OCI-LY7 (cell line): ENCODE measurements at regions of chr10 and their contacts with region 1.

Region 1: DNA sequence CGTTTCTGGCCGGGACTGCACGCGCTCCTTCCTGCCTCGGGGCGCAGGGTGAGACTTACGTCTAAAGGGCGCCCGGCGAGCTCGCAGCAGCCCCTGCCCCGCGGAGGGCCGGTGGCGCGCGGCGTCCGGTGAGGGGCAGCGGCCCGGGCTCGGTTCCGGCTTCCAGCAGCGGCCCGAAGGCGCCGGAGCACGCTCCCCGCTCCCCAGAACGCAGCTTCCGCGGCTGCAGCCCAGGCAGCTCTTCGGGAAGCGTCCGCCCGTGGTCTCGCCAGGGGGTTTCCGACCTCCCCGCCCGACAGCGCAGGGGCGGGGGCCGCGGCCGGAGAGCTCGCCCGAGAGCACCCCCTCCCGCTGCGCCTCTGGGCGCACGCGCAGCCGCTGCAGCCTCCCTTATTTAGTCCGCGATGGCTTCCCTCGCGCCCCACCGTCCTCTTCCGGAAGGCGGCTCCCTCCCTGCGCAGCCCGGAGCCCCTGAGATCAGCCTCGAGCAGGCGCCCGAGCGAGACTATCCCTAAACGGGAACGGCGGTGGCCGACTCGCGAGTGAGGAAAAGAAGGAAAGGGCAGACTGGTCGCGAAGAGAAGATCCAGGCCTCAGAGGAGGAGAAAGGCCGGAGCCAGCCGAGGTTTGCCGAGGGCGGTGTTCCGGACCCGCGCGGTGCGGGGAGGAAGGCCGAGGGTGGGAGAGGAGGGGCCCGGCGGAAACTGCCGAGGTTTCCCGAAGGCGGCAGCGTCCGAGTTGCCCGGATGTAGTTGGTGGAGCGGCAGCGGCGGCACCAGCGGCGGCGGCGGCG is at the start of gene WAC:
- DNase-seq: peak; percentile 95
- H3K4me3 ChIP-seq: peak within 1 kb of the TSS; percentile 100
- H3K27ac ChIP-seq: peak within 1 kb of the TSS; percentile 85
- H3K4me1 ChIP-seq: peaks cover 45% of the 10 kb centered on the region
- CTCF ChIP-seq: no peak
- total RNA-seq, gene WAC: 111 and 114 TPM in 2 replicates

Region 2: DNA sequence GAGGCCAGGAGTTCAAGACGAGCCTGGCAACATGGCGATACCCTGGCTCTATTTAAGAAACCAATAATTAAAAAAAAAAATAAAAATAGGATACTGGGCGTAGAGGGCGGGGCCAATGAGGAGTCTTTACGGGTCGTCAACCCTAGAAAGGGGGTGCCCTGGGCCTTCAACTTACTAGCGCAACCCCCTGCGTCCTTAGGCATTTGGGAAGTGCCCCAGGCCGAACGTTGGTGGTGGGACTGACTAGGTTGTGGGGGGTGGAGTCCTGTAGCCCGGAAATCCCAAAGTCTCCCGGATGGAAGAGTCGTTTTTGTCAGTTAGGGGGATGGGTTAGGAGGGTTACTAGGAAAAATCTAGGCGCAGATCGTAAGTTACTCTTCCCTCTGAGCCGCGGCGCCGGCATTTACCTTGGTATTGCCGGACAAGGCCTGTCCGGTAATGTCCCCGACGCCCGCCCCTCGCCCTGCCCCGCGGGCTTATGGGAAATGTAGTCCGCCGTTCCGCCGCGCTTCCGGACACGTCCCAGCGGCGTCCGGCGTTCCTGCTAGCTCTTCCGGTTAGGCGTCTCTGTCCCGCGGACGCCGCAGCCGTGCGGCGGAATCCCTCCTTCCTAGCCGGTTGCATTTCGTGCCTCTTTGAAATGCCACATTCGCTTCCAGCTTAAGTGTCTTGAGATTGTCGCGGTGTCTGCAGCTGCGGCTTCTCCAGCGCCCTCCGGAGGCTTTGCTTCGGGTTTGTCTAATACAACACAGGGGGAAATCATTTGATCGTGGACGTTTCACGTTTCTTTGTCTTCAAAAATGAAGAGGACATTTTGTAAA is 1290.7 kb before region 1 on chr10:
- CTCF ChIA-PET with region 1: no interaction called
- POLR2A ChIA-PET with region 1: no interaction called
- intact Hi-C with region 1: loop called (anchors 5 kb)
- DNase-seq: peak; percentile 96
- H3K4me3 ChIP-seq: peak overlapping the region; percentile 93
- H3K27ac ChIP-seq: peak overlapping the region; percentile 96
- H3K4me1 ChIP-seq: peaks cover 31% of the 10 kb centered on the region
- CTCF ChIP-seq: peak; percentile 77

Region 3: GRCh38 chr10:28284123-28284522 is 248.5 kb before region 1 on chr10:
- CTCF ChIA-PET with region 1: no interaction called
- POLR2A ChIA-PET with region 1: no interaction called
- intact Hi-C with region 1: loop called (anchors 2 kb)
- DNase-seq: peak; percentile 45
- H3K4me3 ChIP-seq: peak overlapping the region; percentile 3
- H3K27ac ChIP-seq: peak overlapping the region; percentile 97
- H3K4me1 ChIP-seq: peaks cover 76% of the 10 kb centered on the region
- CTCF ChIP-seq: no peak

Region 4: DNA sequence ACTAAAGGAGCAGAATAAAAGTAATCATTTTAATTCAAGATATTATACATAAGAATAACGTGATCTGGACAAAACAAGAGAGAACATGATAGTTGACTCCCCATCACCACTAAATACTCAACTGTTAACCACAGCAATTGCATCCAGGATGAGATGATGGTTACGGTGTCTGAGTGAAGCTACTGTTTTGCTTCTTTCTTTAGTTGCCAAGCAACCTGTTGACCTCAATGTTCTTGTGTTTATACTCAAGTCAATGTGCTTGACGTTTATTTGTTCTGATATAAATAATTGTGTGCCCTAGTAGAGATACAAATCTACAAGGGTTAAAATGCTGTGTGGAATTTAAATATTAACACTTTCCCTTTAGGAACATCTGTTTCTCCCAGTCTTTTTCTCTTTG is 198.3 kb before region 1 on chr10:
- CTCF ChIA-PET with region 1: interaction called, 3 read pairs
- POLR2A ChIA-PET with region 1: interaction called, 3 read pairs
- intact Hi-C with region 1: loop called (anchors 5 kb)
- DNase-seq: peak; percentile 81
- H3K4me3 ChIP-seq: peak overlapping the region; percentile 70
- H3K27ac ChIP-seq: peak overlapping the region; percentile 89
- H3K4me1 ChIP-seq: peaks cover 75% of the 10 kb centered on the region
- CTCF ChIP-seq: no peak

Region 5: GRCh38 chr10:28479425-28479865 is 53.1 kb before region 1 on chr10:
- CTCF ChIA-PET with region 1: no interaction called
- POLR2A ChIA-PET with region 1: no interaction called
- intact Hi-C with region 1: no loop called
- DNase-seq: no peak
- H3K4me3 ChIP-seq: no peak overlapping the region
- H3K27ac ChIP-seq: no peak overlapping the region
- H3K4me1 ChIP-seq: no peaks in the 10 kb centered on the region
- CTCF ChIP-seq: no peak

Region 6: DNA sequence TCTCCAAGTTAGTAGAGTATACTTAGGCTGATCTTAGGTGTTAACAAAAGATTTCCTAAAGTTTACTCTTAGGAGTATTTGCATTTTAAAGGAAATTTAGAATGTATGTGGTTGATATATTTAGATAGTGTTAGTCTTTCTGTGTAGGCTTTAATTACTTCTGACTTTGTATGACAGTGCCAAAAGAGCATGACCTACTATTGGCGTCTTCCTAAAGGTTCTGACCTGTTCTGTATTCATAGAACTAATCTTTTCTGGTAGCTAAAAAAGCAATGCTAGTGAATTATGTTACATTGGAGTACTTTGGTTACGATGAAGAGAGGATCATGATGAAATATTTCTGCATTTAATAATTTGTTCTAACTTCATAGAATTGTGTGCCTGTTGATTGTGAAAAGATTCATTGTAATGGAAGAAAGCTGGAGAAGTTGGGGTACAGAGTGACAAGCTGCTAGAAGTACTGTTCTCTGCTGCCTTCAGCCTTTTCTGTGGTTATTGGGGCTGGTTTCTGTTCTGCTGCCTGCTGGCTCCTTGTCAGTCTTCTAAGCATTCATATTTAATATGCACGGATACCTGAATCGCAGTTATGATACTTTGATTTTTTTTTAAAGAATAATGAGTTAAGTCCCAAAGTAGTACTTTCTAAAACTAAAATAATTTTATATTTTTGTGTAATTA is 13.5 kb after region 1 on chr10:
- CTCF ChIA-PET with region 1: no interaction called
- POLR2A ChIA-PET with region 1: interaction called, 24 read pairs
- intact Hi-C with region 1: no loop called
- DNase-seq: no peak
- H3K4me3 ChIP-seq: no peak overlapping the region
- H3K27ac ChIP-seq: no peak overlapping the region
- H3K4me1 ChIP-seq: peaks cover 17% of the 10 kb centered on the region
- CTCF ChIP-seq: no peak

Region 7: GRCh38 chr10:28554952-28555351 is 22.4 kb after region 1 on chr10:
- CTCF ChIA-PET with region 1: interaction called, 4 read pairs
- POLR2A ChIA-PET with region 1: interaction called, 24 read pairs
- intact Hi-C with region 1: no loop called
- DNase-seq: no peak
- H3K4me3 ChIP-seq: no peak overlapping the region
- H3K27ac ChIP-seq: no peak overlapping the region
- H3K4me1 ChIP-seq: peaks cover 25% of the 10 kb centered on the region
- CTCF ChIP-seq: no peak